Endothelial cell of umbilical vein (primary cell): ENCODE measurements at regions of chr17 and their contacts with region 1.

Region 1: GRCh38 chr17:58352014-58352842 is at the start of gene SUPT4H1:
- DNase-seq: peak; percentile 89
- H3K4me3 ChIP-seq: peak within 1 kb of the TSS; percentile 71 to 87 (median 86)
- H3K27ac ChIP-seq: peak within 1 kb of the TSS; percentile 49
- H3K4me1 ChIP-seq: peaks cover 4% of the 10 kb centered on the region
- H3K27me3 ChIP-seq: no peaks in the 10 kb centered on the region
- CTCF ChIP-seq: no peak
- POLR2A ChIP-seq: peak; percentile 97
- total RNA-seq, gene SUPT4H1: 70.9 and 77.5 TPM in 2 replicates

Region 2: DNA sequence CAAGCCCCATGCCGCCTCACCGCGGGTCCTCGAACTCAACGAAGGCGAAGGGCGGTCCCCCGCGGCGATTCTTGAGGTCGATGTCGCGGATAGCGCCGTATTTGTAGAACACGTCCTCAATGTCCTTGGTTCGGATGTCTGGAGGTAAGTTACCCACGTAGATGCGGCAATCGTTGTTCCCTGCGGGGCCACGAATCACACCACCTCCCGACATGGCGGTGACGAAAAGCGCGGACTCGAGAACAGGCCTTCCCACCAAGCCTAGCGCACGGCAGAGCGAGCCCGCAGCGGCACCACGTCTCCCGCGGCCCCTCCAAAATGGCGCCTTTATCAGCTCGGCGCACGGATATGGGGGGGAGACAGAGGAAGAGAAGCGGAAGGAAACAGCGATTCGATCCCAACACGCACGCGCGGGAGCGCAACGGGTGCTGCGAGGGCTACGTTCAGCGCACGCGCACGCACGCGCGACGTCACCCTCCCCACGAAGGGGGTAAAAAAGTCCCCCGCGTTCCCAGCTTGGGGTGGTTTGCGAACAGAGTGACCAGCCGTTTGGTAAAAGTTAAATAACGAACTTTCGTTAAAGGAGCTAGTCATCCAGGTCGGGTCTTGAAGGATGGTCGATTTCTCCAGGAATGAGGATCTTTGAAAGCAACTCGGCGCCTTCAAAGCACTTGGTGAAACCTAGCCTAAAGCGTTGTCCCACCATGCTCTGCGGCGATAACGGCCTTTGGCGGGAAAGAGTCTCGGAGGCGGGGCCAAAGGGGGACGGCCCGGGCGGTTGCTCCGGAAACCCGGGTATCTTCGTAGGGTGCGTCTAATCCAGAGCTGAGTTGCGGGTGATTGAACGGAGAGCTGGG is 345.1 kb before region 1 on chr17 and contains the start of gene SRSF1:
- CTCF ChIA-PET with region 1: no interaction called
- POLR2A ChIA-PET with region 1: interaction called, 3 read pairs
- dilution Hi-C with region 1: no loop called
- intact Hi-C with region 1: loop called (anchors 2 kb)
- DNase-seq: peak; percentile 98
- H3K4me3 ChIP-seq: peak within 1 kb of the TSS; percentile 39 to 95 (median 85)
- H3K27ac ChIP-seq: peak within 1 kb of the TSS; percentile 67
- H3K4me1 ChIP-seq: peaks cover 36% of the 10 kb centered on the region
- H3K27me3 ChIP-seq: no peaks in the 10 kb centered on the region
- CTCF ChIP-seq: no peak
- POLR2A ChIP-seq: peak; percentile 97
- total RNA-seq, gene SRSF1: 309 and 316 TPM in 2 replicates

Region 3: GRCh38 chr17:58337600-58338453 is 14.4 kb before region 1 on chr17:
- CTCF ChIA-PET with region 1: interaction called, 6 read pairs
- POLR2A ChIA-PET with region 1: interaction called, 12 read pairs
- dilution Hi-C with region 1: no loop called
- intact Hi-C with region 1: no loop called
- DNase-seq: no peak
- H3K4me3 ChIP-seq: no peak overlapping the region
- H3K27ac ChIP-seq: no peak overlapping the region
- H3K4me1 ChIP-seq: peaks cover 4% of the 10 kb centered on the region
- H3K27me3 ChIP-seq: no peaks in the 10 kb centered on the region
- CTCF ChIP-seq: no peak
- POLR2A ChIP-seq: no peak

Region 4: GRCh38 chr17:58391302-58391984 is 39.2 kb after region 1 on chr17:
- CTCF ChIA-PET with region 1: interaction called, 3 read pairs
- POLR2A ChIA-PET with region 1: no interaction called
- dilution Hi-C with region 1: no loop called
- intact Hi-C with region 1: loop called (anchors 5 kb)
- DNase-seq: peak; percentile 82
- H3K4me3 ChIP-seq: no peak overlapping the region
- H3K27ac ChIP-seq: no peak overlapping the region
- H3K4me1 ChIP-seq: peaks cover 7% of the 10 kb centered on the region
- H3K27me3 ChIP-seq: peaks cover 10 to 39% of the 10 kb centered on the region in 2 experiments
- CTCF ChIP-seq: no peak
- POLR2A ChIP-seq: no peak

Region 5: GRCh38 chr17:58417300-58418092 is 65.3 kb after region 1 on chr17 and contains the start of gene RNF43:
- CTCF ChIA-PET with region 1: interaction called, 19 read pairs
- POLR2A ChIA-PET with region 1: interaction called, 5 read pairs
- dilution Hi-C with region 1: no loop called
- intact Hi-C with region 1: loop called (anchors 1 kb)
- DNase-seq: peak; percentile 88
- H3K4me3 ChIP-seq: no peak within 1 kb of the TSS
- H3K27ac ChIP-seq: no peak within 1 kb of the TSS
- H3K4me1 ChIP-seq: no peaks in the 10 kb centered on the region
- H3K27me3 ChIP-seq: peaks cover 10 to 50% of the 10 kb centered on the region in 2 experiments
- CTCF ChIP-seq: peak; percentile 60 to 81
- POLR2A ChIP-seq: no peak
- total RNA-seq, gene RNF43: not detected in 2 replicates